Sigmoid colon (tissue), 7 donors: ENCODE measurements at regions of chr1 and their contacts with region 1.

Region 1: DNA sequence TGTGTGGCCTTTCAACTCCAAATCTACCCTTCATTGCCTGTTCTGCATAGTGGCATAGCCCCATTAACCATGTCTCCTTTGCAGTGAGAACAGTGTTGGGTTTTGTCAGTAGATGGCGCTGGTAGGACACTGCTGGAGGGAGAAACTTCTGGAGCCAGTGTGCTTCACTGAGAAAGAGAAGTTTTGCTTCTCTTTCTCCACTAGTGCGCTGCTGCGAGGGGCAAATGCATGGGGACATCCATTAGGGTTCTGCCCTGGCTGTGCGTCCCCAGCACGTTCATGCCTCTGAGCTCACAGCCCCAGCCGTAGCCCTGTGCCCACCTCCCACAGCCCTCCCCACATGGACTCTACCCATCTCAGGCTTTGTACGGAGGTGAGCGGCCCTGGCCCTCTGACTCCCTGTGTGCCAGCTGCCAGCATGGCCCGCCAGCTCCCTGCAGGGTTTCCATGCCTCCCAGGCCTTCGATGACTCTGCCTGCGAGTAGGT is 53.1 kb downstream of the RIMS3 start:
- DNase-seq: no peak
- H3K4me3 ChIP-seq: no peak overlapping the region
- H3K27ac ChIP-seq: no peak overlapping the region
- H3K4me1 ChIP-seq: no peaks in the 10 kb centered on the region
- H3K27me3 ChIP-seq: no peaks in the 10 kb centered on the region
- CTCF ChIP-seq: peak; percentile 65 to 80 (median 74)
- EP300 ChIP-seq: no peak
- POLR2A ChIP-seq: no peak

Region 2: GRCh38 chr1:40344597-40344996 is 267.8 kb before region 1 on chr1:
- intact Hi-C with region 1: no loop called
- DNase-seq: peak; percentile 71
- H3K4me3 ChIP-seq: peak overlapping the region in 1 of 4 donors; percentile 9
- H3K27ac ChIP-seq: peak overlapping the region in 1 of 4 donors; percentile 27
- H3K4me1 ChIP-seq: no peaks in the 10 kb centered on the region
- H3K27me3 ChIP-seq: no peaks in the 10 kb centered on the region
- CTCF ChIP-seq: no peak
- EP300 ChIP-seq: no peak
- POLR2A ChIP-seq: no peak

Region 3: DNA sequence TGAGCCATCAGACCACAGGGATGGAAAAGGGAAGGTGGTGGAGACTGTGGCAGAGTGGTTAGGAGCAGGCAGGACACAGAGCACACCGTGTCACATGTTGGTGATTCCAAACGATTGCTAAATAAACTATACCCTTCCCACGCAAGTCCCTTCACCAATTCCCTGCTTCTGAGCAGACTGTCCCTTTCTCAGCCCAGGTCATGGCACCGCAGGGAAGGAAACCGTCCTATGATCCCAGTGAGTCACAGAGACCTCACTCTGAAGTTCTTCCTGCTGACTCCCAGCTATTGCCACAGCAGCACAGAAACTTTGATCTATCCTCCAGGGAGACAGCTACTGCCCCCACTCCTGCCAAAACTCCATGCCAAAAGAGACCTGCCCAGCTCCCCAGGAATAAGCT is 33.9 kb after region 1 on chr1:
- intact Hi-C with region 1: no loop called
- DNase-seq: no peak
- H3K4me3 ChIP-seq: no peak overlapping the region
- H3K27ac ChIP-seq: no peak overlapping the region
- H3K4me1 ChIP-seq: no peaks in the 10 kb centered on the region
- H3K27me3 ChIP-seq: no peaks in the 10 kb centered on the region
- CTCF ChIP-seq: no peak
- EP300 ChIP-seq: no peak
- POLR2A ChIP-seq: no peak

Region 4: DNA sequence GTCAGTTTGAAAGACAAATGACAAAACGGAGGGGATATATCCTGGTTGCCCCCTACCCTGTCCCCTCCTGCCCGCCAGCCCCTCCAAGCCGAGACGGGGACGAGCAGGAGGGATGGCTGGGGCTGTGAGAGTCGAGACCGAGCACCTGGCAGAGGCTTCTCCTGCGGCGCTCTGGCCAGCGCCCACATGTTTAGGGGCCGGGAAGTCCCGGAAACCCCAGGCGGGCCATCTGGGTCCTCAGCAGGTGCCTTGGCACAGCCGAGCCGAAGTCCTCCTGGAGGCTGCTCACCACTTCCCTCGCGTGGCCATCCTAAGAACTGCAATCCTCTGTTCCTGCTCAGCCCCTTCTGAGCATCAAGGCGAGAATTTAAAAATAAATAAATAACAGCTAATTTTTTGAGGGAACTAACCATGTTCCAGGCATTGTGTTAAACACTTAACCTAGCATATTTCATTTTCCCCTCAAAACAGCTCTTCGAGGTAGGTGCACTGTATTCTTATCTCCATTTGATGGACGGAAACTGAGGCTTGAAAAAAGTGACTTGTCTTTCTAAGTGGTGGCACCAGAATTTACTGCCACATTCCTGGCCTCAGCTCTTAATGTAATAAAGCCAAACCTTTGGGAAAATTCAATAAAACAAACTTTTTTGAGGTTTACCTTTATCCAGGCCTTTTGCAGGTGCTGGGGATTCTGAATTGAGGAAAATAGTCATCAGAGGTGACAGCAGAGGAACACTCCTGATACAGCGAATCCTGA is 56.6 kb after region 1 on chr1:
- intact Hi-C with region 1: loop called (anchors 5 kb)
- DNase-seq: peak; percentile 86
- H3K4me3 ChIP-seq: peak overlapping the region in 2 of 4 donors; percentile 21 to 27
- H3K27ac ChIP-seq: no peak overlapping the region
- H3K4me1 ChIP-seq: peaks cover 0 to 26% (median 23%) of the 10 kb centered on the region in 4 donors
- H3K27me3 ChIP-seq: no peaks in the 10 kb centered on the region
- CTCF ChIP-seq: peak; percentile 62 to 97 (median 82)
- EP300 ChIP-seq: no peak
- POLR2A ChIP-seq: no peak

Region 5: GRCh38 chr1:40774266-40774998 is 162.0 kb after region 1 on chr1:
- intact Hi-C with region 1: loop called (anchors 5 kb)
- DNase-seq: peak; percentile 76
- H3K4me3 ChIP-seq: no peak overlapping the region
- H3K27ac ChIP-seq: peak overlapping the region in 3 of 4 donors; percentile 31 to 52 (median 50)
- H3K4me1 ChIP-seq: peaks cover 0 to 17% (median 13%) of the 10 kb centered on the region in 4 donors
- H3K27me3 ChIP-seq: no peaks in the 10 kb centered on the region
- CTCF ChIP-seq: peak; percentile 33 to 84 (median 68)
- EP300 ChIP-seq: no peak
- POLR2A ChIP-seq: no peak

Region 6: GRCh38 chr1:40951943-40952743 is 339.8 kb after region 1 on chr1:
- intact Hi-C with region 1: loop called (anchors 2 kb)
- DNase-seq: peak; percentile 87
- H3K4me3 ChIP-seq: no peak overlapping the region
- H3K27ac ChIP-seq: no peak overlapping the region
- H3K4me1 ChIP-seq: peaks cover 0 to 21% (median 15%) of the 10 kb centered on the region in 4 donors
- H3K27me3 ChIP-seq: no peaks in the 10 kb centered on the region
- CTCF ChIP-seq: peak; percentile 86 to 95 (median 90)
- EP300 ChIP-seq: no peak
- POLR2A ChIP-seq: no peak

Region 7: DNA sequence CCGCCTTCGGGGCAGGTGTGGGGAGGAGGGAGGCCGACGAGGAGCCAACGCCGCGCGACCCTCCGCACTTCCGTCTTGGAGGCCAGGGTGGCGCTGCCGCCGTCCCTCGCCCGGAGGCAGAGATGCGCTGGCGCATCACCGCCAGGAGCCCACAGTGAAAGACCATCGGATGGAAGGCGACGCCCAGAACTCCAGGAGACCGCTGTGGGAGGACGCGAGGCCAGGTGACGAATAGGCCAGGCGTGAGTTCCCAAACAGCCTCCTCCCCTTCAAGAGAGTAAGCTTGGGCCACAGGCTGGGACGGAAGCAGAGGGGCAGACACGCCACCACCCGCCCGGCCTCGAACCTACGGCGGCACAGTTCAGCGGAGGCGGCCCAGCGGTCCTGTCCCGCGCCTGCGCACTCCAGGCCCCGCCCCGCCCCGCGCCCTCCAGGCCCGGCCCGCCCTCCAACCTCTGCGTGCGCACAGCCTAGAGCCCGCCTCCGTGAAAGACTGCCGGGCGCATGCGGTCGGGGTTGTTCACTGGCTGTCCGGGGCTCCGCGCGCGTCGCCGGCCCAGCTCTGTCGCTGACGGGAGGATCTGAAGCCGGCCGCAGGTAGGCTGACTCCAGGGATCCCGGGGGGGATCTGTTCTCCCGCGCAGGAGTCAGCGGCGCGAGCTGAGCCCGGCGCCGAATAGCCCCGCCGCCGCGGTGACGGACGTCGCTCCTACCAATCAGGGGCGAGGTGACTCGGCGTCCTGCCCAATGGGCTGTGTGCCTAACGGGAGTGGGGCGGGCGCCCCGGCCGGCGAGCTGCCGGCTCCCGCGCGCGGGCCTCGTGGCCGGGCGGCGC is 367.1 kb after region 1 on chr1 and contains the start of gene CTPS1:
- intact Hi-C with region 1: no loop called
- DNase-seq: peak; percentile 98
- H3K4me3 ChIP-seq: peak within 1 kb of the TSS; percentile 53 to 76 (median 74)
- H3K27ac ChIP-seq: peak within 1 kb of the TSS; percentile 93 to 98 (median 96)
- H3K4me1 ChIP-seq: peaks cover 0 to 56% (median 45%) of the 10 kb centered on the region in 4 donors
- H3K27me3 ChIP-seq: no peaks in the 10 kb centered on the region
- CTCF ChIP-seq: peak in 2 of 4 experiments; percentile 22 to 23
- EP300 ChIP-seq: no peak
- POLR2A ChIP-seq: peak; percentile 23 to 52
- total RNA-seq, gene CTPS1: 26.0 to 99.0 (median 58.0) TPM